WTC11 (cell line): ENCODE measurements at regions of chr9 and their contacts with region 1.

Region 1: DNA sequence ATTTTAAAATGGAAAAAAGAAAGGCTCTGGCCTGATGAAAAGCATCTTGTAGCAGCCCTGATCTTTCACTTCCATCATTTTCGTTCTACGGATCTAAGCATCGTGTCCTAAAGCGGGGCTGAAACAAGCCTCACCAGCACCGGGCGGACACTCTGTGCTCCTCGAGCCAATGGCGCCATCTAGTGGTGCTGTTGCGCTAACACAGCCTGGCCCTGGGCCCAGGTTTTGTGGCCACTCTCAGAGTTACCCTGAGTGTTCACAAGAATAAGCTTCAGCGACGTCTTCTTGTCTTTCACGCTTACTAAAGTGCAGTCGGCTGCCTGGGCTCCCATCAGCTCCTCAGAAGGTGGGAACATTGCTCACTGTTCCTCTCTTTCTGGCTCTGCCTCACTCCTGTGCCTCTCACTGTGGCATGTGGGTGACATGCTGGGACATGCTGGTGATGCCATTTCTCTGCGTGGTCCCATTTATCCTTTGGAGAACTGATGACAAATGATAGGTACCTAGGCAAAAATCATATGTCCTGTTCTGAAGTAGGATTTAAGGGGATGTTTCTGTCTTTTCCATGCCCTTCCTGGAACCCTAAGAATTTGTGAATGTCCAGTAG is 32.7 kb downstream of the DMRT3 start:
- DNase-seq: peak; percentile 89
- ATAC-seq: peak; percentile 94
- H3K4me3 Mint-ChIP-seq: no peak overlapping the region
- H3K27ac Mint-ChIP-seq: no peak overlapping the region
- H3K4me1 Mint-ChIP-seq: peaks cover 15% of the 10 kb centered on the region
- H3K27me3 Mint-ChIP-seq: peaks cover 20% of the 10 kb centered on the region
- CTCF ChIP-seq: peak; percentile 98

Region 2: GRCh38 chr9:893843-894420 is 115.3 kb before region 1 on chr9:
- CTCF ChIA-PET with region 1: interaction called, 37 read pairs
- POLR2A ChIA-PET with region 1: interaction called, 4 read pairs
- DNase-seq: peak; percentile 64
- ATAC-seq: peak; percentile 89
- H3K4me3 Mint-ChIP-seq: no peak overlapping the region
- H3K27ac Mint-ChIP-seq: no peak overlapping the region
- H3K4me1 Mint-ChIP-seq: peaks cover 7% of the 10 kb centered on the region
- H3K27me3 Mint-ChIP-seq: peaks cover 8% of the 10 kb centered on the region
- CTCF ChIP-seq: peak; percentile 71

Region 3: DNA sequence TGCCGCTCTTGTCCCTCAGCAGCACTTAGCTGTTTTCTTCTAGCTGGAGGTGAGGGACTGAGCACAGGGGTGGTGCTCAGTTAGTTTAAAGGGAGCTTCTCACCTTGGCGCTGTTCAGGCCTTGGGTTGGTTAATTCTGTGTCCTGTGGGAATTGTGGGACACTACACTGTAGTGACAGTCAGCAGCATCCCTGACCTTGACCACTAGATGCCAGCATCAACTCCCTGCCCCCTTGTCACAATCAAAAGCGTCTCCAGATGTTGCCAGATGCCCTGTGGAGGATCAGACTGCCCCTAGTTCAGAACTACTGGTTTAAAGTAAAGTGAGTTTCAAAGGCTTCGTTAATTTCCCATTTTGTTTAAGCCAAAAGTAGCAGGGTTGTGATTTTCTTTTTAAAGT is 98.2 kb before region 1 on chr9:
- CTCF ChIA-PET with region 1: interaction called, 12 read pairs
- POLR2A ChIA-PET with region 1: no interaction called
- DNase-seq: peak; percentile 41
- ATAC-seq: peak; percentile 61
- H3K4me3 Mint-ChIP-seq: no peak overlapping the region
- H3K27ac Mint-ChIP-seq: no peak overlapping the region
- H3K4me1 Mint-ChIP-seq: peaks cover 39% of the 10 kb centered on the region
- H3K27me3 Mint-ChIP-seq: no peaks in the 10 kb centered on the region; the same call in 1 of the 2 replicates
- CTCF ChIP-seq: no peak

Region 4: GRCh38 chr9:982394-983230 is 26.6 kb before region 1 on chr9:
- CTCF ChIA-PET with region 1: interaction called, 17 read pairs
- POLR2A ChIA-PET with region 1: no interaction called
- DNase-seq: no peak
- ATAC-seq: no peak
- H3K4me3 Mint-ChIP-seq: no peak overlapping the region
- H3K27ac Mint-ChIP-seq: no peak overlapping the region
- H3K4me1 Mint-ChIP-seq: peaks cover 24% of the 10 kb centered on the region
- H3K27me3 Mint-ChIP-seq: peaks cover 98% of the 10 kb centered on the region
- CTCF ChIP-seq: no peak

Region 5: DNA sequence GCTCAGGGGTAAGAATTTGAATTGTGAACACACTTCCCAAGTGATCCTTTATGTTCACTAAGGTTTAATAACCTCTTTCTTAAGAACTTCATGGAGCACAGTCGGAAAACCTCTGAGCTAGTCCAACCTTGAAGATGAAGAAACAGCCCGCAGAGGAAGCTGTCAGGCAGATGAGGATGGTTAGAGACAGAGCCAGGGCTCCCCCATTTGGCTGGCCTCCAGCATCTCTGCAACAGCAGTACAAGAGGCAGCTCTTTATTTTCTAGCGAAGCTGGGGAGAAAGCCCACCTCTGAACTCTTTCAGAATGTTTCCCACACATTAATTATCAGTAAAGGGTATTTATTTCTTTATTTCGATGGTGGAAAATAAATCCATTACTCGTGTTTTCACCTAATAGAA is 391.8 kb after region 1 on chr9:
- CTCF ChIA-PET with region 1: interaction called, 14 read pairs
- POLR2A ChIA-PET with region 1: no interaction called
- DNase-seq: peak; percentile 55
- ATAC-seq: peak; percentile 85
- H3K4me3 Mint-ChIP-seq: no peak overlapping the region
- H3K27ac Mint-ChIP-seq: no peak overlapping the region
- H3K4me1 Mint-ChIP-seq: peaks cover 10% of the 10 kb centered on the region; the same call in 1 of the 2 replicates
- H3K27me3 Mint-ChIP-seq: peaks cover 9% of the 10 kb centered on the region
- CTCF ChIP-seq: no peak